Right ventricle myocardium inferior (tissue), 1 donor: ENCODE measurements at regions of chr13 and their contacts with region 1.

Region 1: DNA sequence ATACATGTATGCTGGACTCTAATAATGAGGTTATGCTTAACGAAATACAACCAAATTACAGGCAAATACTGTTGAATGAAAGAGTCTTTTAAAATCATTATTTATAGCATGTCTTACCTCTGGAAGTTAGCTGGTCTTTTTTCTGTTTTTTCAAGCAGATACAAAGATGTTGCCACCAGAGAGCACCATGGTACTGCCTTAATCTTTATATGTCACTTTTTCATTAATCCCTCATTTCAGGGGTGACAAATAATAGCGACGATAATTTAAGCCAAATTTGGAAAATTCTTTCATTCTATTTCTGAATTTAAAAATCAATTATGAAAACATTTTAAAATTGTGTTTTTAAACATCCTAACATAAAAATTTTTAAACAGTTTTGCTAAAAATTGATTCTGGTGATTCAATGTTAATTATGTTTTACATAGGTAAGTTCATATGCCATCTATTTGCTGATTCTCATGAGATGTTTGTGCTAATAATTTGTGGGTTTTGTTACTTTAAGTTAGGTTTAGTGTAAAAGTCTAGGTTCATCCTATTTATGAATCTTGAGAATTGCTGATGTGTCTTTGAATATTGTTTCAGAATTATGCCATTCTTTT is 379.3 kb upstream of the SGCG start:
- DNase-seq: no peak
- ATAC-seq: no peak

Region 2: DNA sequence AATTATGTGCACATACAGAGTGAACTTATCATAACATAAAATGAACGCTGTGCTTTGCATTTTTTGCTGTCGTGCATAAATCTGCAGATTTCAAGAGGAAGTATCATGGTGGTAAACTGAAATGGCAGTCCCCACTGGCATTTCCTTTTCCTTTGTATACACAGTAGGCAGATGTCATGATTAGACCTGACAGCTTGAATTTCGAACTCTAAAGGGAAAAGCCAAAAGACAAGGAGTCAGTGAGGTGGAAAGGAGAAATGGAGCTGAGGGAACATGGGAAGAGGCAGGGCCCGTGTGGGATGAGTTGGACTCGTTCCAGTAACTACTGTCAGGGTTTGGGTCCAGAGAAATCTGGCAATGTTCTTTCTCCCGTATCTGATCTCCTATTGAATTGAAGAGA is 74.8 kb before region 1 on chr13:
- intact Hi-C with region 1: no loop called
- DNase-seq: no peak
- ATAC-seq: no peak

Region 3: GRCh38 chr13:22744688-22745452 is 56.6 kb before region 1 on chr13:
- intact Hi-C with region 1: no loop called
- DNase-seq: no peak
- ATAC-seq: no peak

Region 4: DNA sequence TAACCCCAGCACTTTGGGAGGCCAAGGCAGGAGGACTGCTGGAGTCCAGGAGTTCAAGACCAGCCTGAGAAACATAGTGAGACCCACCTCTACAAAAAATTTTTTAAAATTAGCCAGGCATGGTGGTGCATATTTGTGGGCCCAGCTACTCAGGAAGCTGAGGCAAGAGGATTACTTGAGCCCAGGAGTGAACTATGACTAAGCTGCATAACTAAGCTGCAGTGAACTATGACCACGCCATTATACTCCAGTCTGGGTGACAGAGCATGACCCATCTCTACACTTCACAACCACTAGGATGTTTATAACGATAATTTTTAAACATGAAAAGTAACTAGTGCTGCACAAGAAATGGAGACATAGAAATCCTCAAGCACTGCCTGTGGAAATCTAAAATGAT is 26.6 kb after region 1 on chr13:
- intact Hi-C with region 1: no loop called
- DNase-seq: no peak
- ATAC-seq: no peak

Region 5: GRCh38 chr13:23020223-23020843 is 218.8 kb after region 1 on chr13:
- intact Hi-C with region 1: loop called (anchors 2 kb)
- DNase-seq: no peak
- ATAC-seq: peak; percentile 72

Region 6: DNA sequence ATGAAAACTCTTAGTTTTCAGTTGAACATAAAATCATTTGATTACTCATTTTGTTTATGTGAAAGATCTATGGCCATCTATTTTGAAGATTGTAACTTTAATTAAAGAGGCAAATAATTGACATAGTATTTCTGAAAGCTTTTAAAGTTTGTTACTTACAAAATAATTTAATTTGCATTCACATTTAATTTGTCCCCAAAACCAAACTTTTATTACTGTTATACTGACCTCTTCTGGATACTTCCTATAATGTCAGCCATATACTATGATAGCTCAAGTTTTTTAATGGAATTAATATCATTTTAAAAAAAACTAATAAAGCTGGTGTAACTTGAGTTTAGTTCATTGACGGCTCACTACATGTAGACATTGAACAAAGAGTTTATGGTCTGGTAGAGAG is 374.4 kb after region 1 on chr13:
- intact Hi-C with region 1: loop called (anchors 10 kb)
- DNase-seq: no peak
- ATAC-seq: no peak

Region 7: GRCh38 chr13:23741879-23742510 is 940.5 kb after region 1 on chr13:
- intact Hi-C with region 1: no loop called
- DNase-seq: no peak
- ATAC-seq: no peak